MCF 10A (cell line): ENCODE measurements at regions of chr14 and their contacts with region 1.

Region 1: DNA sequence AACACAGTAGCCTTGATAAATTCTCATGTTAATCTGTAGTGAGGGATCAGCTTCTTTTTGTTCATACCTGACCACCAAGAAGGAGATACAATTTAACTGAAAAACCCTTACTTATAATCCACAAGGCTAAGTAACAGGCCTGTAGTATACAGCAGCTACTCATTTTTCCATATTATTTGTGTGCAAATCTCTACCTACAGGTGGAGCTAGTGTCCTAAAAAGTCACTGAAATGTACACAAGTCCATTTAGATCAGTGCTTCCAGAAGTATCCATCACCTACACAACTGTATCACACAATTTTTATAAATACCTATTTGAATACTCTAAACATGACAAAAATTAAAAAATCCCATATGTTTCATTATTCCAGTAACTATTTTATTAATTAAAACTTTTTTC is 173.2 kb downstream of the SLC35F4 start:
- DNase-seq: peak; percentile 69
- H3K4me3 Mint-ChIP-seq: no peak overlapping the region
- H3K27ac Mint-ChIP-seq: no peak overlapping the region
- H3K4me1 Mint-ChIP-seq: no peaks in the 10 kb centered on the region
- H3K27me3 Mint-ChIP-seq: no peaks in the 10 kb centered on the region
- CTCF ChIP-seq: peak; percentile 80

Region 2: DNA sequence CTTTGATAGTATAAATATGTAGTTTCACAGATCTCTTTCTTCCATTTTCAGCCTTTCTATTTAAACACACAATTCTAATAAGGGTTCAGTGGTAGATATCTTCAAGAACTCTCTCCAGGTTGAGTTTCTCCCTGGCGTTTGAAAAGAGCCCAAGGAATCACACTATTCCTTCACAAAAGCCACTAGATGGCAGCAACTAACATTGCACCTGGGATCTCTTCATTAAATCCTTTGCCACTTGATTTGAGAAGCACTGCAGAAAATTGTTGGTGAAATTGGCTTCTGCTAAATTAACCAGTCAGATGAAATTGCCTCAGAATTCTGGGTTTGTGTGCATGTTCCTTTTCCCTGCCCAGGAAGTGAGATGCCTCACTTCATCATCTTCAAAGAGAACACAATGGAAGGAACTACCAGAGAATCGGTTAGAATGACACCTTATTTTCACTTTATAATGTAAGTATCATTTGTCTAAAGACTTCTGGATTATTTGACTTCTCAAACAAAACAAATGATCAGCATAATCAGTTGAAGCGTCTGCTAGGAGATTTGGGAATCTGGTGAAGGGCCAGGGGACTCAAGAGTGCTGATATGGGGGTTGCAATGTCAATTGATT is 205.8 kb before region 1 on chr14:
- CTCF ChIA-PET with region 1: interaction called, 10 read pairs
- POLR2A ChIA-PET with region 1: no interaction called
- intact Hi-C with region 1: loop called (anchors 2 kb)
- DNase-seq: peak; percentile 64
- H3K4me3 Mint-ChIP-seq: no peak overlapping the region
- H3K27ac Mint-ChIP-seq: no peak overlapping the region
- H3K4me1 Mint-ChIP-seq: no peaks in the 10 kb centered on the region
- H3K27me3 Mint-ChIP-seq: no peaks in the 10 kb centered on the region
- CTCF ChIP-seq: peak; percentile 62

Region 3: DNA sequence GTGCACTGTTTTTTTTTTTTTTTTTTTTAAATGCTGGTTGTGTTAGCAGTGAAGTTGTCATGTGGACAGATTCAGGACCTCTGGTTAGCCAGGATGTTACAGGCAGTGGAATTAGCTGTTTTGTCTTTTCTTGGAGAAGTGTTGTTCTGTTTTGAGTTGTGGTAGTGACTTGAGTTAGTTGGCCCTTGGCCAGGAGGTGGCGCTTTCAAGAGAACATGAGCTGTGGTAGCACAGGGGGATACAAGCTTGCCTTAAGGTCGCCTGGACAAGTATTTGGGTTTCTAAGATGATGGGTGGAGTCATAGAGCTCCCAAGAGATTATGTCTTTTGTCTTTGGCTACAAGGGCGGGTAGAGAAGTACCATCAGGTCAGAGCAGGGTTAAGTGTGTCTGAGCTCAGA is 165.7 kb before region 1 on chr14:
- CTCF ChIA-PET with region 1: no interaction called
- POLR2A ChIA-PET with region 1: no interaction called
- intact Hi-C with region 1: no loop called
- DNase-seq: peak; percentile 9
- H3K4me3 Mint-ChIP-seq: no peak overlapping the region
- H3K27ac Mint-ChIP-seq: no peak overlapping the region
- H3K4me1 Mint-ChIP-seq: no peaks in the 10 kb centered on the region
- H3K27me3 Mint-ChIP-seq: peaks cover 13% of the 10 kb centered on the region
- CTCF ChIP-seq: no peak

Region 4: GRCh38 chr14:57884175-57884574 is 191.5 kb after region 1 on chr14:
- CTCF ChIA-PET with region 1: interaction called, 60 read pairs
- POLR2A ChIA-PET with region 1: no interaction called
- intact Hi-C with region 1: no loop called
- DNase-seq: peak; percentile 12
- H3K4me3 Mint-ChIP-seq: no peak overlapping the region
- H3K27ac Mint-ChIP-seq: no peak overlapping the region
- H3K4me1 Mint-ChIP-seq: peaks cover 12% of the 10 kb centered on the region
- H3K27me3 Mint-ChIP-seq: peaks cover 15% of the 10 kb centered on the region
- CTCF ChIP-seq: peak; percentile 52